ENCODE measurements at regions of chr11 and their contacts with region 1.

Region 1: DNA sequence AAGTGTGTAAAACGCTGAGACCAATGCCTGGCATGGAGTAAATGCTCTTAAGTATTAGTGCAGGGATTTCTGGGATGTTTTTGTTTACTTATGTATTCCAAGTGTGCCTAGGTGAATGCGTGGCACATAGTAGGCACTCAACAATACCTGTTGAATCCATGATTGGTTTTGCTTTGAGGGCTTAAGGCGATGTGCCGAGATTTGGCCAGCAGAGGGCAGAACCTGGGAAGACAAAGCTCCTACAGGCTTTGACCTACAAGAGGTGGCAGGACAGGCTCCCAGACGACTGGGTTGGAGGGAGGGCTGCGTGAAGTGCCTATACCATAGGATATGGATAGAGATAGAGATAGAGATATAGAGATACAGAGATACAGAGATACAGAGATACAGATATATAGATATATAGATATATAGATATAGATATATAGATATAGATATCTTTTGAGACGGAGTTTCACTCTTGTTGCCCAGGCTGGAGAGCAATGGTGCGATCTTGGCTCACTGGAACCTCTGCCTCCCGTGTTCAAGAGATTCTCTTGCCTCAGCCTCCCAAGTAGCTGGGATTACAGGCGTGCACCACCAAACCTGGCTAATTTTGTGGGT is 13.9 kb downstream of the KCNE3 start:
- DNase-seq: peak; percentile 88
- H3K4me3 ChIP-seq: no peak overlapping the region
- H3K27ac ChIP-seq: peak overlapping the region in 1 of 8 donors; percentile 23
- H3K4me1 ChIP-seq: peaks cover 0 to 35% (median 14%) of the 10 kb centered on the region in 6 donors
- H3K27me3 ChIP-seq: peaks cover 0 to 11% (median 0%) of the 10 kb centered on the region in 7 donors
- CTCF ChIP-seq: peak; percentile 57 to 87 (median 78)
- POLR2A ChIP-seq: no peak

Region 2: GRCh38 chr11:74568028-74568427 is 114.6 kb after region 1 on chr11:
- intact Hi-C with region 1: loop called (anchors 2 kb)
- DNase-seq: no peak
- H3K4me3 ChIP-seq: no peak overlapping the region
- H3K27ac ChIP-seq: no peak overlapping the region
- H3K4me1 ChIP-seq: no peaks in the 10 kb centered on the region
- H3K27me3 ChIP-seq: peaks cover 0 to 7% (median 0%) of the 10 kb centered on the region in 7 donors
- CTCF ChIP-seq: no peak
- POLR2A ChIP-seq: no peak